ENCODE measurements at regions of chr6 and their contacts with region 1.

Region 1: GRCh38 chr6:16761471-16762267 is 409 bp upstream of the ATXN1 start:
- DNase-seq: peak; percentile 89
- ATAC-seq: peak; percentile 27
- H3K4me3 ChIP-seq: peak overlapping the region; percentile 95
- H3K27ac ChIP-seq: peak overlapping the region; percentile 97
- H3K4me1 ChIP-seq: peaks cover 50% of the 10 kb centered on the region
- H3K27me3 ChIP-seq: no peaks in the 10 kb centered on the region
- CTCF ChIP-seq: no peak

Region 2: GRCh38 chr6:15674690-15675386 is 1086.8 kb before region 1 on chr6:
- CTCF ChIA-PET with region 1: no interaction called
- POLR2A ChIA-PET with region 1: no interaction called
- intact Hi-C with region 1: no loop called
- DNase-seq: no peak
- ATAC-seq: no peak
- H3K4me3 ChIP-seq: no peak overlapping the region
- H3K27ac ChIP-seq: no peak overlapping the region
- H3K4me1 ChIP-seq: no peaks in the 10 kb centered on the region
- H3K27me3 ChIP-seq: peaks cover 70% of the 10 kb centered on the region
- CTCF ChIP-seq: no peak

Region 3: GRCh38 chr6:16332175-16332542 is 429.5 kb before region 1 on chr6:
- CTCF ChIA-PET with region 1: no interaction called
- POLR2A ChIA-PET with region 1: interaction called, 19 read pairs
- intact Hi-C with region 1: loop called (anchors 2 kb)
- DNase-seq: peak; percentile 83
- ATAC-seq: peak; percentile 78
- H3K4me3 ChIP-seq: peak overlapping the region; percentile 41; the same call in 1 of the 2 replicates
- H3K27ac ChIP-seq: peak overlapping the region; percentile 8; the same call in 1 of the 2 replicates
- H3K4me1 ChIP-seq: peaks cover 36% of the 10 kb centered on the region
- H3K27me3 ChIP-seq: no peaks in the 10 kb centered on the region
- CTCF ChIP-seq: peak; percentile 95

Region 4: GRCh38 chr6:16681260-16681873 is 80.3 kb before region 1 on chr6:
- CTCF ChIA-PET with region 1: interaction called, 4 read pairs
- POLR2A ChIA-PET with region 1: no interaction called
- intact Hi-C with region 1: loop called (anchors 2 kb)
- DNase-seq: peak; percentile 94
- ATAC-seq: peak; percentile 83
- H3K4me3 ChIP-seq: peak overlapping the region; percentile 11; the same call in 1 of the 2 replicates
- H3K27ac ChIP-seq: peak overlapping the region; percentile 77
- H3K4me1 ChIP-seq: peaks cover 76% of the 10 kb centered on the region
- H3K27me3 ChIP-seq: no peaks in the 10 kb centered on the region
- CTCF ChIP-seq: no peak

Region 5: DNA sequence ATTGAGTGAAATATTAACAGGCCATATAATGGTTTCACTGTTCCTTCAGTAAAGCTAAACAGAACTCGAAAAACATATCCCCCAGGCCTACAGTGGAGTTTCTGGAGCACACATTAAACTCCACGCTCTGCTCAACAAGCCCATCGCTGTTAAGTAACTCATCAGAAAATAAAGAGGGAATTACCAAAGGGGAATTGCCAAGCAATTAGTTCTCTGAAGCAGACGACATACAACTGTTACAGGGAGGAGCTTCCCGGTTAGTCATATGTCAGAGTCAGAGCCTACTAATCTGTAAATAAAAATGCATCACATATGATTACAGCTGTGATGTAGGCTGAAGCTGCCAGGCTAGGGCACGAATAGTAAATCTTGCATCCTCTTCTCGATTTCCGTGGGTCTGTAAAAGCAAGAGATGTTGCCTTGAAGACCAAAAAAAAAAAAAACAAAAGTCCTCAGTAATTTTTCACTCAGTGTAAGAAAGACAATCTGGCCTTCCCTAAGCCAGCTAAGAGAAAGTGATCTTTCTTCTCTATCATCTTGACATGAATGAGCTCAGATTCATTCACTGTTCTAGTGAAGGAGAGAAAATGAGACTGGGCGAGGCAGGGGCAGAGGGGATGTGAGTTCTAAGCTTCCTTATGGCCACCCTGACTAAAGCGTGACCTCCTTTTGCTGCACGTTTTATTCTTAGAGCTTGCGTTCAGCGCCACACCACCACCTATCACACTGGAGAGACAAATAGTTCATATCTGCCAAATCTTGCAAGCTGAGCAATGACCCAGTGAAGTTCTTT is 14.2 kb before region 1 on chr6:
- CTCF ChIA-PET with region 1: interaction called, 6 read pairs
- POLR2A ChIA-PET with region 1: interaction called, 16 read pairs
- intact Hi-C with region 1: no loop called
- DNase-seq: peak; percentile 77
- ATAC-seq: peak; percentile 79
- H3K4me3 ChIP-seq: peak overlapping the region; percentile 8; the same call in 1 of the 2 replicates
- H3K27ac ChIP-seq: peak overlapping the region; percentile 98
- H3K4me1 ChIP-seq: peaks cover 69% of the 10 kb centered on the region
- H3K27me3 ChIP-seq: no peaks in the 10 kb centered on the region
- CTCF ChIP-seq: no peak

Region 6: DNA sequence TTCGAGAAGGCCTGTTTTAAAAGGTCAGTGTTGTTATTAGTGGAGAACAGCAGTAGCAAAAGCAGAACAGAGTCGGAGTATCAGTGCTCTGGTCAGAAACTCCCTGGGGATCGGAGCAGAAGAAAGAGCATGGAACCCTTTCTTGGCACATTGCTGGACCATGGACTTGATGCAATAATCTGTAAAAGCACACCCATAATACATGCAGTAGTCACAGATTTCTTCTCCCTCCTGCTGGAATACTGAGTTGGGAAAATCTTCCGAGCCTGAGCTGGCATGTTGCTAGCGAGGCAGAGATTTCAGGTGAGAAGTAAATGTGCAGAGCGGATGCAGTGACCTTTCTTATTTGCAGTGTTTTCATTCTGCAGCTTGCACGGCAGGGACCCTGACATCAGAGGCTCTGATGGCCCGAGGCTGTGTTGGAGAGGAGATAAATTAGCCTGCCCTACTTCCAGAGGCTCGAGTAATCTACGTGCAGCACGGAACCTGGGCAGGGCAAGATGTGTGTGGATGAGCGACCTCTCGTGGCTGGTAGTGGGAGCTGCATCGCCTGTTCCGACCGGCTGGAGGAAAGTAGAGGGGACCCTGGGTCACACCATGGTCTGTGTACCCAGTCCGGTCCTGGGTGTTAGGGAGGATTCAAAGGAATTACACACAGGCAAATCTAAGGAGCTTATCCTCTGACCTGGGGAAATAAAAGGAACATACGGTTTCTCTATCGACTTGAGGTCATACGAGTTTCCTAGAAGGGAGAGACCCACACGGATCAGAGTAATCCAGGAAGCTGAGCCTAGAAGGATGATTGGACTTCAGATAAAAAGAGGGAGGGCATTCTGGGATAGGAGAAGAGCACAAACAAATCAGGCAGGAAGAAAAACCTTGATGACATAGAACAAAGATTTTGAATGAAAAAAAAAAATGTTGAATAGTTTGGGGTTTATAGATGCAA is 203.2 kb after region 1 on chr6:
- CTCF ChIA-PET with region 1: interaction called, 6 read pairs
- POLR2A ChIA-PET with region 1: no interaction called
- intact Hi-C with region 1: loop called (anchors 1 kb)
- DNase-seq: peak; percentile 79
- ATAC-seq: peak; percentile 94
- H3K4me3 ChIP-seq: peak overlapping the region; percentile 42
- H3K27ac ChIP-seq: no peak overlapping the region
- H3K4me1 ChIP-seq: peaks cover 24% of the 10 kb centered on the region
- H3K27me3 ChIP-seq: no peaks in the 10 kb centered on the region
- CTCF ChIP-seq: peak; percentile 95

Region 7: GRCh38 chr6:17365977-17366376 is 604.3 kb after region 1 on chr6:
- CTCF ChIA-PET with region 1: no interaction called
- POLR2A ChIA-PET with region 1: no interaction called
- intact Hi-C with region 1: no loop called
- DNase-seq: peak; percentile 74
- ATAC-seq: peak; percentile 90
- H3K4me3 ChIP-seq: no peak overlapping the region
- H3K27ac ChIP-seq: peak overlapping the region; percentile 15; the same call in 1 of the 2 replicates
- H3K4me1 ChIP-seq: peaks cover 8% of the 10 kb centered on the region
- H3K27me3 ChIP-seq: no peaks in the 10 kb centered on the region
- CTCF ChIP-seq: no peak